ENCODE measurements at regions of chr7 and their contacts with region 1.

Region 1: DNA sequence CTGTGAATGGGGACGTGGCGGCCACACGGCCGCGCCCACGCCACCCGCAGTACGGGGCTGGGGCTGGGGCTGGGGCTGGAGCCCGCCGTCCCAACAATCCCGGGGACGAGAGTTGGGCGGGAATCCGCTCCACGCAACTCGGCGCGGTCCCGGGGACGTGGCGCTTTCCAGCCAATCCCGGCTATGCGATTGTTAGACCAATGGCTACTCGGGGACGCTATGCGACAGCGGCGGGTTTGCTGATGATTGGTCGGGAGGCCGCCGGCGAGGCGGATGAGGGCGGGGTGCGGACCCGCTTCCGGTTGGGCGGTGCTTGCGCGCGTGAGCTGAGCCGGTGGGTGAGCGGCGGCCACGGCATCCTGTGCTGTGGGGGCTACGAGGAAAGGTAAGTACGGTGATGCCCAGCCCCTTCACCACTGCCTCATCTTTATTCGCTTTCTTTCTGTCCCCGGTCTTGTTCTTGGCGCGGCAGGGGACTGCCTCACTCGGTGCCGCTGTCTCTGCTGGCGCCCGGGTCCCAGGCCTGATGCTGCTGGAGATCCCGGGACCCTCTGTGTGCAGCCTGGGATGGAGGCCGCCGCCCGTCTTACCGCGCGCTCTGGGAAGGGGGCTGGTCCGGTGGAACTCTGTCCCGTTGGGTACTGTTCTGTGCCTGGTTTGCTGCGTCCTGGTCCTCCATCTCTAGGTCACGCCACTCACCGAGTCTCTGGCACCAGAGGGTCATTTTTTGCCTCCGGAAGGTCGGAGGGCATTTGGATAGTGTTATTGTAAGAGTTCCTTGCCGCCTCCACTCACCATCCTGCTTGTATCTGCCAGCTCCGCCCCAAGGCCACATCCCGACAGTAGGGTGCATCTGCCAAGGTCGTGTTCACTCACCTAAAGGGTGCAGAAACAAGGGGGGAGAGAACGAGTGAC is at the start of gene CALU:
- DNase-seq: peak; percentile 98
- total RNA-seq, gene CALU: 326 TPM

Region 2: DNA sequence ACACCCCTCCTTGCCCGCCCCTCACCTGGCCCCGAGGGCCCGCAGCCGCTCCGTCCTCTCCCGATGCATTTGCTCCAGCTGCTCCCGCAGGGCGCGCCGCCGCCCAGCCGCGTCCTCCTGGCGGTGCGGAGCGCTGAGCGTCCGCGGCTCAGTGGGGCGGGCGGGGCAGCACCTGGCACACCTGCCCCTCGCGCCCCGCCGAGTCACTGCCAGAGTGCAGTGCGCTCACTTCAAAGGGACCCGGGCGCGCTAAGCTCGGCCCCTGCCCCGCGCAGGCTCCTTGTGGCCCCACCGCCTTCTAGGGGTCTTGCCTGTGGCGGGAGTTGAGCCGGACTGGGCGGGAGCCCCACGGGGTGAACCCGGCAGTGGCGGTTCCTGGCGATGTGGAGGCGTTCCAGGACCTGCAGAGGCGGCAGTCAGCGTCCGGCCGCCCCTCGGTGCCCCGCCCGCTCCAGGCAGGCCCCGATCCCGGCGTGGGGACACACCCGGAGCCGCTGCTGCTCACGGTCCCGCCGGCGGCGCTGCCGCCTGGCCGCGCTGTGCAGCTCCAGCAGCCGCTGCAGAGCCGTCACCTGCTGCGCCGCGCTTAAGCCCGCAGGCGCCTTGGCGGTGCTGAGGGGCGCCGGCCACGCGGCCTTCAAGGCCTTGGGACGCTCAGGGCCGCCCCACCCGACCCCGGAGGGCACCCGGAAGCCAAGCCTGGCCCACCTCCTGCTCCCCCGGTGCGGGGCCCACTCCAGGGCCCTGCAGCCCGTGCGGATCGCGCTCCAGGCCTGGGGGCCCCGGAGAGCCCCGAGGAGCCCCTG is 130.0 kb after region 1 on chr7:
- intact Hi-C with region 1: loop called (anchors 5 kb)
- DNase-seq: no peak

Measured in cardiac septum (tissue), 1 donor.